ENCODE measurements at regions of chr2 and their contacts with region 1.

Region 1: GRCh38 chr2:24046930-24047702 is at the start of gene WDCP:
- DNase-seq: peak; percentile 93
- H3K4me3 Mint-ChIP-seq: peak within 1 kb of the TSS; percentile 93
- H3K27ac Mint-ChIP-seq: peak within 1 kb of the TSS; percentile 81
- H3K4me1 Mint-ChIP-seq: peaks cover 20% of the 10 kb centered on the region
- H3K27me3 Mint-ChIP-seq: peaks cover 6% of the 10 kb centered on the region
- total RNA-seq, gene WDCP: 22.0 and 22.1 TPM in 2 replicates

Region 2: GRCh38 chr2:23939987-23940717 is 107.0 kb before region 1 on chr2 and contains the start of gene UBXN2A:
- intact Hi-C with region 1: loop called (anchors 1 kb)
- DNase-seq: peak; percentile 75
- H3K4me3 Mint-ChIP-seq: peak within 1 kb of the TSS; percentile 92
- H3K27ac Mint-ChIP-seq: peak within 1 kb of the TSS; percentile 89
- H3K4me1 Mint-ChIP-seq: peaks cover 27% of the 10 kb centered on the region
- H3K27me3 Mint-ChIP-seq: peaks cover 4% of the 10 kb centered on the region
- total RNA-seq, gene UBXN2A: 17.6 and 18.3 TPM in 2 replicates

Region 3: GRCh38 chr2:24075915-24076848 is 29.1 kb after region 1 on chr2 and contains the start of gene SF3B6:
- intact Hi-C with region 1: loop called (anchors 1 kb)
- DNase-seq: peak; percentile 98
- H3K4me3 Mint-ChIP-seq: peak within 1 kb of the TSS; percentile 97
- H3K27ac Mint-ChIP-seq: peak within 1 kb of the TSS; percentile 97
- H3K4me1 Mint-ChIP-seq: peaks cover 31% of the 10 kb centered on the region
- H3K27me3 Mint-ChIP-seq: no peaks in the 10 kb centered on the region
- total RNA-seq, gene SF3B6: 137 and 143 TPM in 2 replicates

Measured in activated T-helper 2 cell treated with anti-CD3 and anti-CD28 coated beads, Interferon-gamma antibody, Interleukin-2, Interleukin-4, amounts not matched to agents 10 μg/mL and 5 μg/mL and 100 μg/mL, durations not matched to agents 14 hours and 24 hours and 36 hours (primary cell).